PC-9 (cell line): ENCODE measurements at regions of chr10 and their contacts with region 1.

Region 1: DNA sequence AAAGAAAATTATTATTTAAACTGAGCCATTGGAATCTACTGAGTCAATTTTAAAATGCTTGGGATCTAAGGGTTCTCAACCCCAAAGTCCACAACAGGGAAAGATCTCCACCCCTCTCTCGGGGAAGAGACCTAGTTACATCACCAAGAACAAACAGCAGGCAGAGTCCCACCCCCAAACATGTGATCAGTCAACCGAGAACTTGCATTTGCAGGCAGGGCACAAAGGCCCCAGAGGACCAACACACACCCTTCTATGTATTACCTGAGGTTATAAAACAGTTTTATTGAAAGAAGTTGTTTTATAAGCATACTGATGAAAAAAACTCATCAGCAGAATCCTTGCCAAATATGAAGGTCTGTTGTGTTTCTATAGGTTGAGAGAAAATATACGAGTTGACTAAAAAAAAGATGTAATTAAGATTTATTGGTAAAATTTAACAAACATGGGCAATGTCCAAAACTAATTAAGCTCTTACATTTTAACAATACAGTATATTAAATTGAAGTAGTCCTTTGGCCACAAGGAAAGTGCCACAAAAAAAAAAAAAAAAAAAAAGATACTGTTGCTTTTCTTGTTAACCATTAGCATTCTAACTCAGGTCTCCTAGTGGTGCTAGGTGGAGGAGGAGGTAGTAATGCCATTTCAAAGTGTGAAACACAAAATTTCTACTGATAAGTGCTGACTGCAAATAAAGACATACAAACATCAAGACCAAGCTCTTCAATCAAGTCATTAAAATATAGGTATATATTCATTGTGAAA is 975 bp upstream of the USP54 start:
- DNase-seq: peak; percentile 30 to 57
- H3K4me3 ChIP-seq: peak overlapping the region; percentile 28; the same call in 1 of the 2 replicates
- H3K27ac ChIP-seq: peak overlapping the region; percentile 84
- H3K4me1 ChIP-seq: peaks cover 60% of the 10 kb centered on the region
- H3K27me3 ChIP-seq: no peaks in the 10 kb centered on the region
- CTCF ChIP-seq: no peak

Region 2: GRCh38 chr10:72552857-72553256 is 1039.3 kb before region 1 on chr10:
- CTCF ChIA-PET with region 1: no interaction called
- POLR2A ChIA-PET with region 1: no interaction called
- intact Hi-C with region 1: no loop called
- DNase-seq: peak in 1 of 2 experiments; percentile 77
- H3K4me3 ChIP-seq: no peak overlapping the region
- H3K27ac ChIP-seq: no peak overlapping the region; the same call in 1 of the 2 replicates
- H3K4me1 ChIP-seq: peaks cover 4% of the 10 kb centered on the region; the same call in 1 of the 2 replicates
- H3K27me3 ChIP-seq: no peaks in the 10 kb centered on the region
- CTCF ChIP-seq: no peak

Region 3: GRCh38 chr10:73545357-73545756 is 46.8 kb before region 1 on chr10:
- CTCF ChIA-PET with region 1: interaction called, 10 read pairs
- POLR2A ChIA-PET with region 1: interaction called, 9 read pairs
- intact Hi-C with region 1: no loop called
- DNase-seq: no peak
- H3K4me3 ChIP-seq: no peak overlapping the region
- H3K27ac ChIP-seq: no peak overlapping the region
- H3K4me1 ChIP-seq: no peaks in the 10 kb centered on the region
- H3K27me3 ChIP-seq: no peaks in the 10 kb centered on the region
- CTCF ChIP-seq: no peak

Region 4: GRCh38 chr10:73577788-73578187 is 14.3 kb before region 1 on chr10:
- CTCF ChIA-PET with region 1: no interaction called
- POLR2A ChIA-PET with region 1: interaction called, 16 read pairs
- intact Hi-C with region 1: no loop called
- DNase-seq: peak; percentile 73 to 98
- H3K4me3 ChIP-seq: no peak overlapping the region
- H3K27ac ChIP-seq: peak overlapping the region; percentile 80
- H3K4me1 ChIP-seq: peaks cover 35% of the 10 kb centered on the region
- H3K27me3 ChIP-seq: no peaks in the 10 kb centered on the region
- CTCF ChIP-seq: no peak

Region 5: DNA sequence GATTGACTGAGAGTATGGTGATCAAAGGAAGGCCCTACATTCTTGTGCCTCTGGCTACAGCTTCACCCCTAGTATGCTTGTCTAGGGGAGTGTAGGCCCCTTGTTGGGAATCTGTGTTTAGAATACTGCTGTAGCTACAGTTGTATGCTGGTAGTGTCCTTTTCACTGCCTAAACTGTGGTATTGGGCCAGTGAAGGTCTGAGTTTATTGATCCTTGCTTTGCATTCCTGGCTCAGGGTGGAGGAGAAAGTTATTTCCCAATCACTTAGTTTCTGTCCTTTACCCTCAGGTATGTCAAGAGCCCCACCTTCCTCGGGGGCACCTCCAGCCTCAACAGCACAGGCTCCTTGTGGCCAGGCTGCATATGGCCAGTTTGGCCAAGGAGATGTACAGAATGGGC is 158.7 kb after region 1 on chr10:
- CTCF ChIA-PET with region 1: interaction called, 11 read pairs
- POLR2A ChIA-PET with region 1: no interaction called
- intact Hi-C with region 1: no loop called
- DNase-seq: no peak
- H3K4me3 ChIP-seq: no peak overlapping the region
- H3K27ac ChIP-seq: no peak overlapping the region
- H3K4me1 ChIP-seq: peaks cover 4% of the 10 kb centered on the region; the same call in 1 of the 2 replicates
- H3K27me3 ChIP-seq: no peaks in the 10 kb centered on the region
- CTCF ChIP-seq: no peak